Dendritic cell treated with granulocyte-macrophage colony-stimulating factor and Interleukin-4, amounts not matched to agents 40 ng/mL and 50 ng/mL, for 4 days (primary cell): ENCODE measurements at regions of chr6 and their contacts with region 1.

Region 1: DNA sequence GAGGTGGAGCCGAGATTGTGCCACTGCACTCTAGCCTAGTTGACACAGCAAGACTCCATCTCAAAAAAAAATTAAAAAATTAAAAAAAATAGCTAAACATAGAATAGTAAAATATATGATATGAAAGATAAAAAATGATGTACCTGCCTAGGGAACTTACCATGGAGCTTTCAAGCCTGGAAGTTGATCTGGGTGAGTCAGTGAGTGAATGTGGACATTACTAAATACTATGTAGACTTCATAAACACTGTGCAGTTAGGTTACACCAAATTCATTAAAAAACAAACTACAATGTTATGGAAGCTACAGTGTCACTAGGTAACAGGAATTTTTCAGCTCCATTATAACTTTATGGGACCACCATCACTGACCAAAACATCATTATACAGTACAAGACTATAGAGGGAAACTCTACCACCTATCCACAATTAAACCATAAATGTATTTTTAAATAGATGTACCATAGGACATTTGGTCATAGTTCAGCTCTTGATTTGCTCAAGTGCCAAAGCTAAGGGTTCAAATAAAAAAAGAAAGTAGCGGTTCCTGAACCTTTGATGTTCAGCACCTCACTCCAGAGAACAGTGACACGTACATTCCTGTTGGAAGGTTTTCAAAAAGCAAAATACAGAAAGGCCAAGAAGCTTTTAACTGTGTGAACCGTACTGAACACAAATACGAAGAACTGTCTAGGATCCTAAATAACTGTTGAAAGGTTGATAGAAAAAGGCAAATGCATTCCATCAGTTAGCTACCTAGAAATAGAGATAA is 52.4 kb upstream of the SPDEF start:
- H3K4me3 Mint-ChIP-seq: no peak overlapping the region
- H3K27ac Mint-ChIP-seq: no peak overlapping the region
- H3K4me1 Mint-ChIP-seq: peaks cover 7% of the 10 kb centered on the region
- H3K27me3 Mint-ChIP-seq: no peaks in the 10 kb centered on the region

Region 2: DNA sequence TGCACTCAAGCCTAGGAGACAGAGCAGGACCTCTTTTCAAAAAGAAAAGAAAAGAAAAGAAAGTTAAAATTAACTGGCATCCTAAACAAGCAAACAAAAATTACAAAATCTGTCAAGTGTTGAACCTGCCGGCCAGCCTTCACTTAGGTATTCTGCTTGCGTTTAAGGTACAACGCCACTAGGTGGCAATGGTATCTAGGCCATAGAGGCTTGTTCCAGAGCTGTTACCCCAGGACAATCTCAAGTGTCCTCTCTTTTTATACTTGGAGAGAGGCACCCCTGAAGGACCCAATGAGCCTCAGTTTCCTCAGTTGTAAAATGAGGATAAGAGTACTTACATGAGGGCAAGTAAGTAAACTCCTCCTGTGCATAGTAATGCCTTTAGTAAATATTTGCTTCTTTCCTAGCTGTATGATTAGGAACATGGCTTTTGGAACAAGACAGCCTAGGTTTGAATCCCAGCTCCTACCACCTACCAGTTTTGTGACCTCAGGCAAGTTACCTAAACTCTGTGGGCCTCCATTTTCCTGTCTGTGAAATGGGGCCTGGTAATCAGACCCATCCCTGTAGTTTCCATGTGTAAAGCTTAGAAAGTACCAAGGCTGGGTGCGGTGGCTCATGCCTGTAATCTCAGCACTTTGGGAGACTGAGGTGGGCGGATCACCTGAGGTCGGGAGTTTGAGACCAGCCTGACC is 148.5 kb before region 1 on chr6:
- intact Hi-C with region 1: loop called (anchors 1 kb)
- H3K4me3 Mint-ChIP-seq: no peak overlapping the region
- H3K27ac Mint-ChIP-seq: no peak overlapping the region
- H3K4me1 Mint-ChIP-seq: peaks cover 18% of the 10 kb centered on the region
- H3K27me3 Mint-ChIP-seq: peaks cover 31% of the 10 kb centered on the region

Region 3: DNA sequence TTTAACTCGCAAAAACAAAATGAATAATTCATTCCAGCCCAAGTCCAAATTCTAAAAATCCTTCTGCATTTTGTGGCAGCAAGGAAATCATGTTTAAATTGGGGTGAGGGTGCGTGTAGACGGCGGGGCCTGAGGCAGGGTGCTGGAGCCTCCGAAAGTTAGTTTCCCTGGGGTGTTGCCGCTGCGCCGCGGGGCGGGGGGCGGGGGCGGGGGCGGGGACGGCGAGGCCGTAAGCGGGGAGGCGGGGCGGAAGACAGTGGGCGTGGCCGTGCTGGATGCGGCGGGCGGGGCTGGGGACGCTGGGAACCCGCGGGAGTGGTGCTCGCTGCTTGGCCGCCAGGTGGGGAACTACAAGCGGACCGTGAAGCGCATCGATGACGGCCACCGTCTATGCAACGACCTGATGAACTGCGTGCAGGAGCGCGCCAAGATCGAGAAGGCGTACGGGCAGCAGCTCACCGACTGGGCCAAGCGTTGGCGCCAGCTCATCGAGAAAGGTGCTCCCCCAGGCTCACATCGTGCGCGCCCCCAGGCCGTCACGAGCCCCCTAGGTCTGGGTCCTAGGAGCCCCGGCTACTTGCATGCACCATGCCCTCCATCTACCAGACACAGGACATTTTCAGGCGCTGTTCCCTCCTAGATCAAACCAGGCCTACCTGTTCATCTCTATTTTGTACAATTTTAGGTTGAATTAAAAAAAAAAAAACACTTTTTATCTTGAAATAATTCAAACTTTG is 81.3 kb before region 1 on chr6:
- intact Hi-C with region 1: loop called (anchors 1 kb)
- H3K4me3 Mint-ChIP-seq: no peak overlapping the region
- H3K27ac Mint-ChIP-seq: no peak overlapping the region
- H3K4me1 Mint-ChIP-seq: no peaks in the 10 kb centered on the region
- H3K27me3 Mint-ChIP-seq: peaks cover 25% of the 10 kb centered on the region